Dorsolateral prefrontal cortex (tissue), 120 donors: ENCODE measurements at regions of chr7 and their contacts with region 1.

Region 1: DNA sequence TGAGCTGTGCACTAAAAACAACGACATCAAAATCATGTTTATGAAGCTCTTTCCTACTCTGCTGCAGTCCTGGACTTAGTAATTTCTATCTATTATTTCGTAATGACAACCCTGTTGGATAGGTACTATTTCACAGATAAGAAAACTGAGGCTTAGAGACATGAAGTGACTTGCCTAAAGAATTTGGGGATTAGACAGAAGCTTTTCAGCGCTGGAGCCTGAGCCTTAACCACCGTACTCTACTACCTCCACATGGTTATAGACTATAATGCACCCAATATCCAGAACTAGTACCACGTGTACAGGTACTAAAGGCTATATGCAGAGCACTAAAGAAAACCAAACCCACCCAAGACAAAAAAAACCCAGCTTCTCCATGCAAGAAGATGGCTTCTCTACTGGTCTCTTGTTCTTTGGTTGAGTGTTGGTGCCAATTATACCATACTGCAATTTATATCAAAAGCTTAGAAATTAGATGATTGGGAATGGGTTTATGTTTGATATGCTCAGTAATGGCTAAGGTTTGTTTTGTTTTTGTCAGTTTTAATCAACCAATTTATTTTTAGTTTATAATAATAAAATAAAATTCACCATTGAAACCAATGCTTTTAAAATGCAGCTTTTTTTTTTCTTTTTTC is 6.5 kb upstream of the SNX10 start:
- DNase-seq: no peak
- H3K4me3 ChIP-seq: no peak overlapping the region
- H3K27ac ChIP-seq: no peak overlapping the region
- H3K27me3 ChIP-seq: no peaks in the 10 kb centered on the region
- CTCF ChIP-seq: peak in 5 of 56 donors; percentile 11 to 25 (median 21)

Region 2: GRCh38 chr7:26083113-26083512 is 202.0 kb before region 1 on chr7:
- intact Hi-C with region 1: loop called in 1 of 2 experiments (anchors 10 kb)
- DNase-seq: no peak
- H3K4me3 ChIP-seq: no peak overlapping the region
- H3K27ac ChIP-seq: no peak overlapping the region
- H3K27me3 ChIP-seq: peaks cover 0 to 29% (median 11%) of the 10 kb centered on the region in 45 donors
- CTCF ChIP-seq: no peak